ENCODE measurements at regions of chr4 and their contacts with region 1.

Region 1: DNA sequence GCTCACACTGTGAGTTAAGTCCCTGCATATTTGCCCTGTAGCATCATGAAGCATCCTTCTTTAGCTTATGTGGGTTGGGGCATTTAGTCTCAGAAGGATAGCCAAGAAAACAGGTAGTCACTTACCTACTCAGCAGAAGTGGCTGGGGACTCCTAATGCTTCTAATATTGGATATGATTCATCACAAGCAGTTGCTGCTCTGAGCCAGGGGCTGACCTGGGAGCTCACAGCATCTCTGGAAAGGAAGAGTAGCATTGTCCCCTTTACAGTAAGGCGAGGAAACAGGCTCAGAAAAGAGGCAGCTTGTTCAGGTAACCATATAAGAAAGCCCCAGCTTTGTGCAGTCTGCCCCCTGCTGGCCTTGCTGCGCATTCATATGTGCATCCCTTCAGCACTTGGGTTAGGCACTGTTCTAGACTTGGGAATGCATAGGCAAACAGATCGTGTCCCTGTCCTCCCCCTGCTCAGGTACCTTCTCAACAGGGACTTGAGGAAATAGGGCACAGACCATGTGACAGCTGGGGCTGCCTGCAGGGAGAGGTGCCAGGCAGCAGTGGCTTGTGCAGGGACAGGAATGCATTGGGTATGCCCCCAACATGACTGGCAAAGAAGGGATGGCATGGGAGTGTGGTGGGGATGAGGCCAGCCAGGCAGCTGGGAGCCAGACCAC is 35.7 kb upstream of the TBC1D14 start:
- DNase-seq: peak; percentile 91
- H3K4me3 Mint-ChIP-seq: no peak overlapping the region
- H3K27ac Mint-ChIP-seq: no peak overlapping the region
- H3K4me1 Mint-ChIP-seq: peaks cover 2% of the 10 kb centered on the region
- H3K27me3 Mint-ChIP-seq: no peaks in the 10 kb centered on the region

Region 2: GRCh38 chr4:6493658-6494304 is 380.1 kb before region 1 on chr4:
- CTCF ChIA-PET with region 1: no interaction called
- intact Hi-C with region 1: no loop called
- DNase-seq: no peak
- H3K4me3 Mint-ChIP-seq: no peak overlapping the region
- H3K27ac Mint-ChIP-seq: no peak overlapping the region
- H3K4me1 Mint-ChIP-seq: no peaks in the 10 kb centered on the region
- H3K27me3 Mint-ChIP-seq: peaks cover 25% of the 10 kb centered on the region

Region 3: DNA sequence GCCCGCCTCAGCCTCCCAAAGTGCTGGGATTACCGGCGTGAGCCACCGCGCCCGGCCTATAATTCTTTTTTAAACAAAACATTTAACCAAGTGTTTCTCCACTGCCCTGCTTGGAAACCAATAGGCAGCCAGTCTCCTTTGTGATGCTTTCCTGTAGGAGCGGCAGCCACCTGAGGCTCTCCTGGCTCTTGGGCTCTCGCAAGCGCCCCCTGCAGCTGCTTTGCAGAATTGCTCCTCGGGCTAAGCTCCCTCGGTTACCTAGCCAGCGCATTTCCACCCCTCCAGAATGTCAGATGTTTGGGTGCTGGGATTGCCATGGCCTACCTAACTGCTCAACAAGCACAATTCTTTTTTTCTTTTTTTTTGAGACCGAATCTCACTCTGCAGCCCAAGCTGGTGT is 172.6 kb before region 1 on chr4:
- CTCF ChIA-PET with region 1: interaction called, 16 read pairs
- intact Hi-C with region 1: no loop called
- DNase-seq: peak; percentile 60
- H3K4me3 Mint-ChIP-seq: no peak overlapping the region
- H3K27ac Mint-ChIP-seq: no peak overlapping the region
- H3K4me1 Mint-ChIP-seq: peaks cover 73% of the 10 kb centered on the region
- H3K27me3 Mint-ChIP-seq: no peaks in the 10 kb centered on the region

Region 4: GRCh38 chr4:6727081-6727942 is 146.6 kb before region 1 on chr4:
- CTCF ChIA-PET with region 1: interaction called, 15 read pairs
- intact Hi-C with region 1: no loop called
- DNase-seq: no peak
- H3K4me3 Mint-ChIP-seq: no peak overlapping the region
- H3K27ac Mint-ChIP-seq: no peak overlapping the region
- H3K4me1 Mint-ChIP-seq: peaks cover 9% of the 10 kb centered on the region
- H3K27me3 Mint-ChIP-seq: no peaks in the 10 kb centered on the region

Region 5: GRCh38 chr4:6768539-6768905 is 105.4 kb before region 1 on chr4:
- CTCF ChIA-PET with region 1: interaction called, 18 read pairs
- intact Hi-C with region 1: no loop called
- DNase-seq: peak; percentile 16
- H3K4me3 Mint-ChIP-seq: no peak overlapping the region
- H3K27ac Mint-ChIP-seq: no peak overlapping the region
- H3K4me1 Mint-ChIP-seq: peaks cover 21% of the 10 kb centered on the region
- H3K27me3 Mint-ChIP-seq: no peaks in the 10 kb centered on the region

Region 6: DNA sequence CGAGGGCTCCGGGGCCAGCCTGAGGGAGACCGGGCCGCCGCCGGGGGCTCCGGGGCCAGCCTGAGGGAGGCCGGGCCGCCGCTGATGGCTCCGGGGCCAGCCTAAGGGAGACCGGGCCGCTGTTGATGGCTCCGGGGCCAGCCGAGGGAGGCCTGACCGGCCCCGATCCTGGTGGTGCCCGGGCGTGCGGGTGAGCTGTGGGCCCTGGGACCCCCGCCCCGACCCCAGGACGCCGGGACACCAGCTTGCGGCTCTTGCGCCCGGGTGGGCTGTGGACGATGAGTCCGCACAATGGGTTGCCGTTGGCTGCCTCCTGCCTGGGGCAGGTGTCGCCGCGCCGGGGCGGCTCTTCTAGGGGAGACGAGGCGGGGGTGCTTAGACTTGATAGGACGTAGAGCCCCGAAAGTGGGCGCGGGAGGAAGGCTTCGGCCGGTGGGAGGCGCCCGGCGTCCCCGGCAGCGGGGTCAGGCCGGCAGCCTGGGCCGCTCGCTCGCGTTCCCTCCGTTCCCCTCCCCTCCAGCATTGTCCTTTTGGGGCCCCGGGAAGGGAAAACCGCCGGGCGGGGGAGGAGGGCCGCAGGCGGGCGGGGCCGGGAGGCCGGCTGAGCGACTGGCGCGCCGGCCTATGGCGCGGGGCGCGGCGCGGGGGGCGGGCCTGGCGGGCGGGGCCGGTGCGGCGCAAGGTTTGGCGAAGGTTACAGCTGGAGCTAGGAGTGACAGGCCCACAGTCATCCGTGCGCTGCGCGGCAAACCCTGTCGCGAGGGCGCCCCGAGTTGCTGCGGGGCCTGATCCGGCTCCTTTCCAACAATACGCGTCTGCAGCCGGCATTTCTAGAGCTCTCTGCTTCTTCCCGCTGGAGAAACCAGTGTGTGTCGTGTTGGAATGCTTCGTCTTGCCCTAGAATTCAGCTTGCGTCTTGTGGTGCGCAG is 90.6 kb before region 1 on chr4:
- CTCF ChIA-PET with region 1: interaction called, 22 read pairs
- intact Hi-C with region 1: loop called (anchors 1 kb)
- DNase-seq: peak; percentile 91
- H3K4me3 Mint-ChIP-seq: peak overlapping the region; percentile 81
- H3K27ac Mint-ChIP-seq: peak overlapping the region; percentile 78
- H3K4me1 Mint-ChIP-seq: peaks cover 51% of the 10 kb centered on the region
- H3K27me3 Mint-ChIP-seq: no peaks in the 10 kb centered on the region

Region 7: DNA sequence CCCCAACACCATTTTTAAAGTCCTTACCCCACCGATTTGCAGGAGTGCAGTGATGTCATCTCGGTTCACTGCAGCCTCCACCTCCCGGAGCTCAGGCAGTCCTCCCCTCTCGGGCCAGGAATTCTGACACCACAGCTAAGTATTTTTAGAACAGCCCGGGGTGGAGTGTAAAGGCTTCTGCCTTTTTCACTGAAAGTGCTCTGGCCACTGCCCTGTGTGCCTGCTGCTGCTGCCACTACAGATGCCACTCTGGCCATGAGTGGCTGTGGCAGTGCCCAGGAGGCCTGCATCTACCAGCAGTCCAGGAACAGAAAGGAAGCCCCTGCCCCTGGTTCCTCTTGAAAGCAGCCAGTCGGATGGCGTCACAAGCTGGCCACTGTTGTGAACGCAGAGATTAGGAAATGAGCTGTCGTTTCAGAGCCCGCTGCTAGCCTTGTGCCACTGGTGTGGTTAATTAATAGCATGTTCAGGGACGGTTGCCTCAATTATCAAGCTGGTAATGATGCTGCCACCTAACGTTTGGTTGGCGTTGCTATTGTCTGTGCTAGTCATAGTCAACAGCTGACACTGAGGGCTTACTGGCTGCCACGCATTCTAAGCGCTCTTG is 12.1 kb after region 1 on chr4:
- CTCF ChIA-PET with region 1: interaction called, 22 read pairs
- intact Hi-C with region 1: no loop called
- DNase-seq: peak; percentile 57
- H3K4me3 Mint-ChIP-seq: no peak overlapping the region
- H3K27ac Mint-ChIP-seq: no peak overlapping the region
- H3K4me1 Mint-ChIP-seq: no peaks in the 10 kb centered on the region
- H3K27me3 Mint-ChIP-seq: no peaks in the 10 kb centered on the region

Region 8: DNA sequence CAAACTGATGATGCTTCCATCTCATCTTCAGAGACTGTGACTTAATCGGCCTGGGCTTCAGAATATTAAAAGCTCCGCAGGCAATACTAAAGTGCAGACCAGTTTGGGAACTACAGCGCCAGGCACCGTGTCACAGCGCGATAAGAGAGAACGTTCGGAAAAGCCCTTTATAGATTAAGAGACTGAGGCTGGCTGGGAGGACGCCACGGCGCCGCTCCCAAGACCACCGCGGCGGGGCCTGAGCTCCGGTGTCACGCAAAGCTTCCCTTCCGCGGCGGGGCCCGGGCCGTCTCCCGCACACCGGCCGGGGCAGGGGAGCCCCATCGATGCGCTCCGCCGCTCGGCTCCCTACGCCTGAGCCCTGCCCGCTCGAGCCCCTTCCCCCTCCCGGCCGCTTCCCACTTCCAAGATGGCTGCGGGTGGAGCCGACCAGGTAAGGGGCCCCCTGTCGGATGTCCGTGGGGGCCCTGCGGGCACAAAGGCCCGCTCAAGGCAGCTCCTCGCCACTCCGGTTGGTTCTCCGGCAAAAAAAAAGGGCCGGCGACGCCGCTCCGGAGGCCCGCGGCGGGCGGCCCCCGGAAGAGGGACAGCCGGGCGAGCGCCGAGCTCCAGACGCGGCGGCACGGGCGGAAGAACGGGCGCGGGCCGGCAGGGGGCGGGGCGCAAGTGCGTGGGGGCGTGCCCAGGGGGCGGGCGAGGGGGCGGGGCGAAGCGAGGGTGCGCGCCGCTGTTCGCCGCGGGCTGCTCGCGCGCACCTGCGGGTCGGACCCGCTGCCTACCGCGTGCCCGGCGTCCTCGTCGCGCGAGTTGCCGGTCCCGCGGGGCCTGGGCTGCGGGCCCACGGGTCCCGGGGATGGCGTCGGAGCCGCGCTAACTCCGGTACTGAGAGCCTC is 35.4 kb after region 1 on chr4 and contains the start of gene TBC1D14:
- CTCF ChIA-PET with region 1: interaction called, 14 read pairs
- intact Hi-C with region 1: no loop called
- DNase-seq: peak; percentile 88
- H3K4me3 Mint-ChIP-seq: peak within 1 kb of the TSS; percentile 92
- H3K27ac Mint-ChIP-seq: peak within 1 kb of the TSS; percentile 86
- H3K4me1 Mint-ChIP-seq: peaks cover 45% of the 10 kb centered on the region
- H3K27me3 Mint-ChIP-seq: peaks cover 3% of the 10 kb centered on the region
- total RNA-seq, gene TBC1D14: 23.6 to 24.6 TPM